ENCODE measurements at regions of chr11 and their contacts with region 1.

Region 1: DNA sequence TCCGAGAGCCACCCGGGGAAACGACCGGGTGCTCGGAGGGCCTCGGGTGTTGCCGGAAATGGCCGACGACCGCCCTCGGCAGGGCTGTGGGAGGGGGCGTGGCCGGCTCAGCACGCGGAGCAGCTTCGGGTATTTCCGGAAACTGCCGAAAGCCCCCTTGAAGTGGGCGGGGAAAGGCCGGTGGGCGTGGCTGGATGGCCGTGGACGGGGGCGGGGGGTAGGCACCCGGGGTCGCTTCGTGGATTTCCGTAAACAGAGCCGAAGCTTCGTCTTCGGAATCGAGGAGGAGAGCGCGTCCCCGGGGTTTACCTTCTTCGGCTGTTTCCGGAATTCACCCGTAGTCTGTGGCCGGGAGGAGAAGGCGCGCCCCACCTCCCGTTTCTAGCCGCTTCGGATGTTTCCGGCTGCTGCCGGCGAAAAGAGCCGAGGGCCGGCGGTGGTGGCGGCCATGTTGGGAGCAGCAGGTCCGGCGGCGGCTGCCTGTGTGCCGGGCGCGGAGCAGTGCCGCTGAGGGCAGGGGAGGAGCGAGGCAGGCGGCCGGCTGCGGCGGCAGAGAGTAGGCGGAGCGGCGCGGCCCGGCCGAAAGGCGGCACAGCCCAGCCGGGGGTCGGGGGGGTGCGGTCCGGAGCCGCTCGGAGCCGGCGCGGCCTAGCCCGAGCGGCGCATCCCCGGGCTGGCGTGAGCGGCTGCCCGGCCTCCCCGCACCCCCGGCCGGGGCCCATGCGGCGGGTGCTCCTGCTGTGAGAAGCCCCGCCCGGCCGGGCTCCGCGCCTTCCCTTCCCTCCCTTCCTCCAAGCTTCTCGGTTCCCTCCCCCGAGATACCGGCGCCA is at the start of gene MARK2:
- DNase-seq: peak; percentile 99 to 100 (median 100)
- ATAC-seq: peak; percentile 86
- H3K4me3 ChIP-seq: peak within 1 kb of the TSS; percentile 93
- H3K4me3 Mint-ChIP-seq: peak within 1 kb of the TSS; percentile 94
- H3K27ac ChIP-seq: peak within 1 kb of the TSS; percentile 46 to 73
- H3K27ac Mint-ChIP-seq: peak within 1 kb of the TSS; percentile 84
- H3K4me1 ChIP-seq: peaks cover 58% of the 10 kb centered on the region
- H3K4me1 Mint-ChIP-seq: peaks cover 59% of the 10 kb centered on the region
- H3K27me3 ChIP-seq: no peaks in the 10 kb centered on the region
- H3K27me3 Mint-ChIP-seq: no peaks in the 10 kb centered on the region
- CTCF ChIP-seq: no peak
- total RNA-seq, gene MARK2: 18.4 to 21.0 TPM

Region 2: DNA sequence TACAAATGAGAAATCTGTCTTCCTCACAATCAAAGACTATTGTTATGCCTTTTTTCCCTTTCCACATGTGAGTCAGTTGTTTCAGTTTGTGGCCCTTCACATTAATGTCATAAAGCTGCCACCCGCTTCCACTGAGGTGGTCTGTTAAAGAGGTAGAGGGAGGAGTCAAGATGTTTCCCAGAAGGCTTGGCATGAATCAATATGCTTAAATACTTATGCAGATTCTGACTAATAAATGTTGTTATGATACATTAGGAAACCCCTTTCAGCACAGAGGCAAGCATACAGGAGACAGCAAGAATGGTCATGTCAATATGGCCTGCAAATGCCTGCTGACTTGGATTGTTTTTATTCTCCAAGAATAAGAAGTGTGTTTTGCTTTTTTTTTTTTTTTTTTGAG is 151.0 kb before region 1 on chr11:
- CTCF ChIA-PET with region 1: no interaction called
- POLR2A ChIA-PET with region 1: no interaction called
- intact Hi-C with region 1: no loop called
- DNase-seq: no peak
- ATAC-seq: no peak
- H3K4me3 ChIP-seq: no peak overlapping the region
- H3K4me3 Mint-ChIP-seq: no peak overlapping the region
- H3K27ac ChIP-seq: no peak overlapping the region
- H3K27ac Mint-ChIP-seq: no peak overlapping the region
- H3K4me1 ChIP-seq: no peaks in the 10 kb centered on the region
- H3K4me1 Mint-ChIP-seq: peaks cover 19% of the 10 kb centered on the region
- H3K27me3 ChIP-seq: no peaks in the 10 kb centered on the region
- H3K27me3 Mint-ChIP-seq: no peaks in the 10 kb centered on the region
- CTCF ChIP-seq: no peak

Region 3: GRCh38 chr11:63866211-63866610 is 27.3 kb after region 1 on chr11:
- CTCF ChIA-PET with region 1: interaction called, 4 read pairs
- POLR2A ChIA-PET with region 1: interaction called, 15 read pairs
- intact Hi-C with region 1: loop called in 1 of 2 experiments (anchors 1 kb)
- DNase-seq: peak; percentile 46 to 88 (median 70)
- ATAC-seq: peak; percentile 65
- H3K4me3 ChIP-seq: no peak overlapping the region
- H3K4me3 Mint-ChIP-seq: peak overlapping the region; percentile 72
- H3K27ac ChIP-seq: peak overlapping the region; percentile 10 to 28
- H3K27ac Mint-ChIP-seq: peak overlapping the region; percentile 67
- H3K4me1 ChIP-seq: peaks cover 87% of the 10 kb centered on the region
- H3K4me1 Mint-ChIP-seq: peaks cover 81% of the 10 kb centered on the region
- H3K27me3 ChIP-seq: no peaks in the 10 kb centered on the region
- H3K27me3 Mint-ChIP-seq: no peaks in the 10 kb centered on the region
- CTCF ChIP-seq: no peak

Region 4: GRCh38 chr11:63888170-63889086 is 49.5 kb after region 1 on chr11:
- CTCF ChIA-PET with region 1: interaction called, 15 read pairs
- POLR2A ChIA-PET with region 1: interaction called, 21 read pairs
- intact Hi-C with region 1: loop called (anchors 1 to 2 kb)
- DNase-seq: peak; percentile 55 to 86 (median 72)
- ATAC-seq: peak; percentile 87
- H3K4me3 ChIP-seq: peak overlapping the region; percentile 81
- H3K4me3 Mint-ChIP-seq: peak overlapping the region; percentile 96
- H3K27ac ChIP-seq: peak overlapping the region; percentile 69 to 73
- H3K27ac Mint-ChIP-seq: peak overlapping the region; percentile 78
- H3K4me1 ChIP-seq: peaks cover 86% of the 10 kb centered on the region
- H3K4me1 Mint-ChIP-seq: peaks cover 78% of the 10 kb centered on the region
- H3K27me3 ChIP-seq: no peaks in the 10 kb centered on the region
- H3K27me3 Mint-ChIP-seq: no peaks in the 10 kb centered on the region
- CTCF ChIP-seq: no peak

Region 5: GRCh38 chr11:63916837-63917691 is 78.2 kb after region 1 on chr11 and contains the start of gene RCOR2:
- CTCF ChIA-PET with region 1: interaction called, 6 read pairs
- POLR2A ChIA-PET with region 1: interaction called, 13 read pairs
- intact Hi-C with region 1: loop called in 1 of 2 experiments (anchors 1 kb)
- DNase-seq: peak; percentile 34 to 83 (median 57)
- ATAC-seq: peak; percentile 73
- H3K4me3 ChIP-seq: peak within 1 kb of the TSS; percentile 51
- H3K4me3 Mint-ChIP-seq: peak within 1 kb of the TSS; percentile 82
- H3K27ac ChIP-seq: no peak within 1 kb of the TSS
- H3K27ac Mint-ChIP-seq: no peak within 1 kb of the TSS
- H3K4me1 ChIP-seq: peaks cover 45% of the 10 kb centered on the region
- H3K4me1 Mint-ChIP-seq: peaks cover 16% of the 10 kb centered on the region
- H3K27me3 ChIP-seq: no peaks in the 10 kb centered on the region
- H3K27me3 Mint-ChIP-seq: no peaks in the 10 kb centered on the region
- CTCF ChIP-seq: no peak
- total RNA-seq, gene RCOR2: not detected

Region 6: GRCh38 chr11:63945477-63946163 is 106.7 kb after region 1 on chr11:
- CTCF ChIA-PET with region 1: interaction called, 43 read pairs
- POLR2A ChIA-PET with region 1: interaction called, 36 read pairs
- intact Hi-C with region 1: loop called (anchors 1 kb)
- DNase-seq: peak in 13 of 14 experiments; percentile 29 to 74 (median 43)
- ATAC-seq: peak; percentile 72
- H3K4me3 ChIP-seq: no peak overlapping the region
- H3K4me3 Mint-ChIP-seq: no peak overlapping the region
- H3K27ac ChIP-seq: no peak overlapping the region
- H3K27ac Mint-ChIP-seq: no peak overlapping the region
- H3K4me1 ChIP-seq: peaks cover under 1% of the 10 kb centered on the region
- H3K4me1 Mint-ChIP-seq: peaks cover 8% of the 10 kb centered on the region
- H3K27me3 ChIP-seq: no peaks in the 10 kb centered on the region
- H3K27me3 Mint-ChIP-seq: no peaks in the 10 kb centered on the region
- CTCF ChIP-seq: peak; percentile 70

Region 7: GRCh38 chr11:63986156-63986931 is 147.5 kb after region 1 on chr11 and contains the start of gene OTUB1:
- CTCF ChIA-PET with region 1: no interaction called
- POLR2A ChIA-PET with region 1: interaction called, 8 read pairs
- intact Hi-C with region 1: loop called in 1 of 2 experiments (anchors 5 kb)
- DNase-seq: peak; percentile 72 to 93 (median 83)
- ATAC-seq: peak; percentile 89
- H3K4me3 ChIP-seq: peak within 1 kb of the TSS; percentile 80
- H3K4me3 Mint-ChIP-seq: peak within 1 kb of the TSS; percentile 96
- H3K27ac ChIP-seq: peak within 1 kb of the TSS; percentile 68 to 89
- H3K27ac Mint-ChIP-seq: peak within 1 kb of the TSS; percentile 96
- H3K4me1 ChIP-seq: peaks cover 29% of the 10 kb centered on the region
- H3K4me1 Mint-ChIP-seq: peaks cover 27% of the 10 kb centered on the region
- H3K27me3 ChIP-seq: no peaks in the 10 kb centered on the region
- H3K27me3 Mint-ChIP-seq: no peaks in the 10 kb centered on the region
- CTCF ChIP-seq: no peak
- total RNA-seq, gene OTUB1: 57.5 to 60.0 TPM

Region 8: DNA sequence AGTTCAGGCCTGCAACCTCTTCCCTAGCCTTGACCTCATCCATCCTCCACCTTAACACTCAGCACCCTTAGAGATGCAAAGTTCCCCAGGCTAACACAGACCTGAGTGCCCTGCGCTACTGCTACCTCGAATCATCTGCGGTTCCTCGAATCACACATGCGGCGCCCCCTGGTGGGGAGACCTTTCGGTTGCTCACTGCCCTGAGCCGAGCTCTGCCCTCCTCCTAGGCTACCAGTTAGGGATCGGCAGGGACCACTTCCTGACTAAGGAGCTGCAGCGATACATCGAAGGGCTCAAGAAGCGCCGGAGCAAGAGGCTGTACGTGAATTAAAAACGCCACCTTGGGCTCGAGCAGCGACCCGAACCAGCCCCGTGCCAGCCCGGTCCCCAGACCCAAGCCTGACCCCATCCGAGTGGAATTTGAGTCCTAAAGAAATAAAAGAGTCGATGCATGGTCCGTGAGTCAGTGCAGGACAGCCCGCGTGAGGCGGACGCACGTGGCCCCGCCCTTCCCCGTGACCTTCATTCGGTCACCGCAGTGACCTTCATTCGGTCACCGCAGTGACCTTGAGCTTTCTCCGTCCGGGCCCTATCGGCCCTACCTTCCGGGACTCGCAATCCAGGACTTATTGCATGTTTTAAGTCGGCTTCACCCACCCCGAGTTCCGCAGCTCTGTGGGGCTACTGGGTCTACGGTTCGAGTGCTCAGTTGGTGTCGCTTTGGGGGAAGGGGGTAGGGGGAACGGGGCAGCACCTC is 465.6 kb after region 1 on chr11:
- CTCF ChIA-PET with region 1: no interaction called
- POLR2A ChIA-PET with region 1: no interaction called
- intact Hi-C with region 1: loop called in 1 of 2 experiments (anchors 5 kb)
- DNase-seq: peak; percentile 88 to 98 (median 94)
- ATAC-seq: peak; percentile 27
- H3K4me3 ChIP-seq: peak overlapping the region; percentile 92
- H3K4me3 Mint-ChIP-seq: peak overlapping the region; percentile 98
- H3K27ac ChIP-seq: peak overlapping the region; percentile 84 to 93
- H3K27ac Mint-ChIP-seq: peak overlapping the region; percentile 96
- H3K4me1 ChIP-seq: peaks cover 55% of the 10 kb centered on the region
- H3K4me1 Mint-ChIP-seq: peaks cover 42% of the 10 kb centered on the region
- H3K27me3 ChIP-seq: peaks cover 25 to 26% of the 10 kb centered on the region in 2 experiments
- H3K27me3 Mint-ChIP-seq: peaks cover 34% of the 10 kb centered on the region
- CTCF ChIP-seq: peak; percentile 92